SK-N-SH (cell line): ENCODE measurements at regions of chr7 and their contacts with region 1.

Region 1: DNA sequence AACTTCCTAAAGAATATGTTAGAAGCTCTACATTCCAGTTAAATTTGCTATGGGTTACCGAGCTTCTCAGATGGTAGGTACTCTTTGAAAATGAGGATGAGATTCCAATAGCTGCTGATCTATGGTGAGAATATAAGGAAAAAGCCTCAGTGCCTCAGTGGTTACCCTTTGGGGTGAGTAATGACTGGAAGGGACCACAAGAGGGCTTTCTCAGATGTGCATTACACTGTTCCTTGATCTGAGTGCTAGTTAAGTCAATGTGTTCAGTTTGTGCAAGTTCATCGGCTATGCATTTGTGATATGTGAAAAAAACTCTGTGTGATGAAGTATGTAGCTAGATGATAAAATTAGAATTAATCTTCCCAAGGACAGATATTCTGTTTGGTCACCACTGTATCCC is 3.5 kb downstream of the NRCAM start:
- DNase-seq: peak; percentile 61
- H3K4me3 ChIP-seq: no peak overlapping the region
- H3K27ac ChIP-seq: no peak overlapping the region; a peak in 1 of 4 replicates
- H3K4me1 ChIP-seq: peaks cover 0 to 10% of the 10 kb centered on the region in 2 experiments; a peak in 2 of 4 replicates
- H3K27me3 ChIP-seq: peaks cover 44% of the 10 kb centered on the region
- CTCF ChIP-seq: peak; percentile 67
- EP300 ChIP-seq: no peak
- RAD21 ChIP-seq: peak; percentile 71

Region 2: DNA sequence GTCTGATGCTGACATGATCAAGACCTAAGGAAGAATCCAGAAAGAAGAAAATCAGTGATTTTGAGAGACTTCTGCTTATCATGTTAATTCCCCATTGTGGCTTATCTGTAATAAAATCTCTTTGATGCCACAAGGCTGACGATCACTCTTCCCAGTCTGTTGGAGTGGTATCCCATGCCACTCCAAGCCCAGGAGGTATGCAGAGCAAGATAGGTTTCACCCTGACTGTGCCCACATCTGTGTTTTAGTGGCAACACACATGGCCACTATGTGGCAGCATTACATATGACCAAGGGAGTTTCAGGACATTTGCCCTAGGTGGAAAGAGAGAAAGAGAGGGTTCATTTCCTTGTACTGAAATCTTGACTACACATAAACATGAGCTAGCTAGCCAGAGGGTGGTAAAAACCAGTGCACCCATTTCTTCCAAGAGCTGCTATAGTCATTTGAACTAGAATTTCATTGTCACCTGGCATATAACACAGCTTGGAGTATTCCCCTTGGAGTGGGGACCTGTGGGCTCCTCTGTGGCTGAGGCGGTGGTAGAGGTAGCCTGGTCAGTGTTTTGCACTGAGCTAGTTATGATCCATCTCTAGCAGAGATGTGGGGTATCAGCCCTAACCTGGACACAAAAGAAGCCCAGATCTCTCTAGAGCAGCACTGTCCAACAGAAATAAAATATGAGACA is 343.4 kb before region 1 on chr7:
- CTCF ChIA-PET with region 1: no interaction called
- POLR2A ChIA-PET with region 1: no interaction called
- DNase-seq: peak; percentile 55
- H3K4me3 ChIP-seq: no peak overlapping the region
- H3K27ac ChIP-seq: no peak overlapping the region
- H3K4me1 ChIP-seq: peaks cover 0 to 2% of the 10 kb centered on the region in 2 experiments; a peak in 1 of 4 replicates
- H3K27me3 ChIP-seq: no peaks in the 10 kb centered on the region
- CTCF ChIP-seq: peak; percentile 54
- EP300 ChIP-seq: no peak
- RAD21 ChIP-seq: peak; percentile 69

Region 3: DNA sequence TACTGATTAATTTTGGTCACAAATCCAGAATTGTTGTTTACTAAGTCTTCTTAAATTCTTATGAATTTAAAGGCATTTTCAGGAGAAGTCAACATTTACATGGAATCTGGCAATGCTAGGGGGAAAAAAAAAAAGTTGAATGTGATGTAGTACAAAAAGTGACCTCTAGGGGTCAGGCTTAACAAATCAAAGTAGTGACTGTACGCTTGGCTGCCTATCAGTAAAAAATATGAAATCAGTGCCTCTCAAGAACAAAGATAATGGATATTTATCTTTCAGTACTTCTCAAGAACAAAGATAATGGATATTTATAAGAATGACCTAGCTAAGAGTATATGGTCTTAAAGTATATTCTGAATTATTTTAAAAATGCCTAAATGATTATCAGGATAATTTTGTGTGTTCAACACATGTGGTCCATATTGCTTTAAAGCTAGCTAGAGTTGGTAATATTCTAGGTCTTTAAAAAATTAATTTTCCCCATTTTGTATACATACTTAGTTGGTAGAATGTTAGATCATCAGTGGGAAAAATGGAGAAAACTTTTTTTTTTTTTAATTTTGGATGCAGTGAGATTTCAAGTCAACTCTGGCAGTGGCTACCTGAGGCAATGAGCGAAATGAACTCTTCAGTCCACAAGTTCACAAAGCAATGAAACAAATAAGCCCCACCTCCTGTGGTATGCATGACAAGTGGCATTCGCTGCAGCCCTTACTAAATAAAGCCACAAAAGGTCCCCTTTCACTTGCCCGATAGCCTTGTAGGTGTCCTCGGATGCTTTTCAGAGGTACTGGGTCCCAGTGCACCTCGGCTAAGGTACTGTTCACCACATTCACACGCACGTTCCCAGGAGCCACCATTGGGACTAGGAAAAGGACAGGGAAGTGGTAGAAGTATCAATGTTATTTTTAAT is 271.4 kb before region 1 on chr7:
- CTCF ChIA-PET with region 1: interaction called, 20 read pairs
- POLR2A ChIA-PET with region 1: interaction called, 9 read pairs
- DNase-seq: peak; percentile 57
- H3K4me3 ChIP-seq: no peak overlapping the region
- H3K27ac ChIP-seq: peak overlapping the region in 1 of 2 experiments; percentile 60; a peak in 1 of 4 replicates
- H3K4me1 ChIP-seq: peaks cover 0 to 9% of the 10 kb centered on the region in 2 experiments; a peak in 2 of 4 replicates
- H3K27me3 ChIP-seq: no peaks in the 10 kb centered on the region
- CTCF ChIP-seq: peak; percentile 96
- EP300 ChIP-seq: 0 out of 4 replicates have a peak, but pooled peaks of 1 of the 2 experiments have one; percentile 13
- RAD21 ChIP-seq: peak; percentile 96

Region 4: DNA sequence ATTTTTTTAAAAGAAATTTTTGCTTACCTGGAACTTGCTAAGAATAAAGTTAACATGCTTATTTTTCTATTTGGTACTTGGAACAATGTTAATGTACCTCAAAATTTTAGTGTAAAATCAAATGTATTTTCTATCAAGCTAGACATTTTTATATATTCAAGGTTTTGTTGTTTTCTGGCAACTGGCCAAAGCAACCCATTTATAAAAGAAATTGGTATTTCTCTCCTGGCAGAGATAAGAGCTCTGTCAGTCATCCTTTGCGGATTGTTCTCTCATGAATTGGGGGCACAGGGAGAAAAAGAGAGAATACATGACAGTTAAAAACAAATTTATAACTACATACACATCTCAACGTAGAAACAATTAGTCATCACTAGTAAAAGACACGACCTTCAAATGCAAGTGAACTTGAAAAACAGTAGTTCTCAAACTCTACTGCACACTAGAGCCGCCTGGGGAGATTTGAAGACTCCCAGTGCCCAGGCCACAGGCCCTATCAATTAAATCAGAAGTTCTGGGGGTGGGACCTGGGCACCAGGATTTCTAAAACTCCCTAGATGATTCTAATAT is 170.2 kb before region 1 on chr7:
- CTCF ChIA-PET with region 1: interaction called, 11 read pairs
- POLR2A ChIA-PET with region 1: no interaction called
- DNase-seq: no peak
- H3K4me3 ChIP-seq: no peak overlapping the region
- H3K27ac ChIP-seq: peak overlapping the region in 1 of 2 experiments; percentile 58; a peak in 1 of 4 replicates
- H3K4me1 ChIP-seq: peaks cover 0 to 26% of the 10 kb centered on the region in 2 experiments; a peak in 3 of 4 replicates
- H3K27me3 ChIP-seq: no peaks in the 10 kb centered on the region
- CTCF ChIP-seq: no peak
- EP300 ChIP-seq: no peak
- RAD21 ChIP-seq: no peak

Region 5: GRCh38 chr7:108328174-108328651 is 124.5 kb before region 1 on chr7:
- CTCF ChIA-PET with region 1: interaction called, 21 read pairs
- POLR2A ChIA-PET with region 1: no interaction called
- DNase-seq: no peak
- H3K4me3 ChIP-seq: peak overlapping the region in 1 of 2 experiments; percentile 21; a peak in 1 of 4 replicates
- H3K27ac ChIP-seq: peak overlapping the region in 1 of 2 experiments; percentile 89; a peak in 2 of 4 replicates
- H3K4me1 ChIP-seq: peaks cover 0 to 62% of the 10 kb centered on the region in 2 experiments; a peak in 2 of 4 replicates
- H3K27me3 ChIP-seq: no peaks in the 10 kb centered on the region
- CTCF ChIP-seq: no peak
- EP300 ChIP-seq: no peak
- RAD21 ChIP-seq: no peak

Region 6: GRCh38 chr7:108402865-108403264 is 49.9 kb before region 1 on chr7:
- CTCF ChIA-PET with region 1: interaction called, 15 read pairs
- POLR2A ChIA-PET with region 1: interaction called, 3 read pairs
- DNase-seq: no peak
- H3K4me3 ChIP-seq: no peak overlapping the region
- H3K27ac ChIP-seq: peak overlapping the region in 1 of 2 experiments; percentile 80; a peak in 2 of 4 replicates
- H3K4me1 ChIP-seq: peaks cover 3 to 26% of the 10 kb centered on the region in 2 experiments; a peak in 3 of 4 replicates
- H3K27me3 ChIP-seq: no peaks in the 10 kb centered on the region
- CTCF ChIP-seq: no peak
- EP300 ChIP-seq: no peak
- RAD21 ChIP-seq: no peak

Region 7: GRCh38 chr7:108425714-108426275 is 26.9 kb before region 1 on chr7:
- CTCF ChIA-PET with region 1: interaction called, 11 read pairs
- POLR2A ChIA-PET with region 1: interaction called, 3 read pairs
- DNase-seq: no peak
- H3K4me3 ChIP-seq: no peak overlapping the region
- H3K27ac ChIP-seq: peak overlapping the region in 1 of 2 experiments; percentile 84; a peak in 2 of 4 replicates
- H3K4me1 ChIP-seq: peaks cover 2 to 31% of the 10 kb centered on the region in 2 experiments; a peak in 2 of 4 replicates
- H3K27me3 ChIP-seq: no peaks in the 10 kb centered on the region; the same call in 1 of the 2 replicates
- CTCF ChIP-seq: no peak
- EP300 ChIP-seq: peak in 1 of 2 experiments; percentile 71; a peak in 1 of 4 replicates
- RAD21 ChIP-seq: no peak

Region 8: GRCh38 chr7:108442039-108442568 is 10.6 kb before region 1 on chr7:
- CTCF ChIA-PET with region 1: interaction called, 44 read pairs
- POLR2A ChIA-PET with region 1: interaction called, 4 read pairs
- DNase-seq: no peak
- H3K4me3 ChIP-seq: no peak overlapping the region
- H3K27ac ChIP-seq: no peak overlapping the region
- H3K4me1 ChIP-seq: peaks cover 0 to 8% of the 10 kb centered on the region in 2 experiments; a peak in 2 of 4 replicates
- H3K27me3 ChIP-seq: no peaks in the 10 kb centered on the region
- CTCF ChIP-seq: no peak
- EP300 ChIP-seq: no peak
- RAD21 ChIP-seq: no peak

Region 9: GRCh38 chr7:108535257-108535656 is 82.5 kb after region 1 on chr7:
- CTCF ChIA-PET with region 1: no interaction called
- POLR2A ChIA-PET with region 1: no interaction called
- DNase-seq: no peak
- H3K4me3 ChIP-seq: no peak overlapping the region
- H3K27ac ChIP-seq: no peak overlapping the region
- H3K4me1 ChIP-seq: no peaks in the 10 kb centered on the region
- H3K27me3 ChIP-seq: no peaks in the 10 kb centered on the region
- CTCF ChIP-seq: no peak
- EP300 ChIP-seq: no peak
- RAD21 ChIP-seq: no peak